PC-3 (cell line): ENCODE measurements at regions of chr20 and their contacts with region 1.

Region 1: DNA sequence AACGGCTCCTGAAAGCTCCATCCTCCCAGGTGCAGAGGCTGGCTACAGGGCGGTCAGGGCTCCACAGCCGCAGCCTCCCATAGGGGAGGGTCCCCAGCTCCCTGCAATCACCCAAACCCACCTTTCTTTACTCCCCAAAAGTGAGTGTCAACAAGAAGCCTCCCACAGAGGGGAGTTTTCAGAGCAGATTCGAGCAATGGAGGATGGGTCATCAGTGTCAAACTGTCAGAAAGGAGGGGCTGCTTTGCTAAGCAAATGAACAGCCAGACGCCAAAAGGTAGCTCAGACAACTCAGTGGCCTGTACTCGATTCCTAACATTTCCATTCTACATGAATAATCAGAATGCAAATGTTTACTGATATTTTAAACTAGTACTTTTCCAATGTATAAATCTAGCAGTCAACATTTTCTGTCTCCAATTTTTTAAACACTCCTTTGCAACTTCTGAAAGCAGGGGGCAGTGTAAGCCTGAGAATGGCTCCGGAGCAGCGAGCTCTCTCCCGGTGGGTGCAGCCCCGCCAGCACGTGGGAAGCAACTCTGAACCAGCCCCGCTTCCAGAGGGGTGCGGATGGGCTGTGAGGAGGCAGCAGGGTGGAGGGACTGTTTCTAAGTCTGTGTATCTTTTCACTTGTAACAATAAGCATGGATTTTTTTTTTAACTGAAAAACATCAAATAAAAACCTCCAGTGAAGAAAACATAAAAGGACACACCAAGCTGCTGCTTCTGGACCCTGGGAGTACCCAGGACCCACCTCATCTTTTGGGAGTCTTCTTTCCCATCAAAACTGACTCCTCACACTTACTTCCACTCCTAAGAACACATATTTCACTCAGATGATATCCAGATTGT is 54.9 kb downstream of the TAF4 start:
- DNase-seq: peak; percentile 60
- ATAC-seq: peak; percentile 82
- H3K4me3 ChIP-seq: no peak overlapping the region
- H3K27ac ChIP-seq: no peak overlapping the region
- H3K4me1 ChIP-seq: no peaks in the 10 kb centered on the region
- H3K27me3 ChIP-seq: no peaks in the 10 kb centered on the region
- CTCF ChIP-seq: peak; percentile 91

Region 2: GRCh38 chr20:61482056-61482887 is 528.5 kb before region 1 on chr20:
- CTCF ChIA-PET with region 1: no interaction called
- POLR2A ChIA-PET with region 1: no interaction called
- intact Hi-C with region 1: no loop called
- DNase-seq: no peak
- ATAC-seq: no peak
- H3K4me3 ChIP-seq: no peak overlapping the region
- H3K27ac ChIP-seq: no peak overlapping the region
- H3K4me1 ChIP-seq: no peaks in the 10 kb centered on the region
- H3K27me3 ChIP-seq: no peaks in the 10 kb centered on the region
- CTCF ChIP-seq: no peak

Region 3: DNA sequence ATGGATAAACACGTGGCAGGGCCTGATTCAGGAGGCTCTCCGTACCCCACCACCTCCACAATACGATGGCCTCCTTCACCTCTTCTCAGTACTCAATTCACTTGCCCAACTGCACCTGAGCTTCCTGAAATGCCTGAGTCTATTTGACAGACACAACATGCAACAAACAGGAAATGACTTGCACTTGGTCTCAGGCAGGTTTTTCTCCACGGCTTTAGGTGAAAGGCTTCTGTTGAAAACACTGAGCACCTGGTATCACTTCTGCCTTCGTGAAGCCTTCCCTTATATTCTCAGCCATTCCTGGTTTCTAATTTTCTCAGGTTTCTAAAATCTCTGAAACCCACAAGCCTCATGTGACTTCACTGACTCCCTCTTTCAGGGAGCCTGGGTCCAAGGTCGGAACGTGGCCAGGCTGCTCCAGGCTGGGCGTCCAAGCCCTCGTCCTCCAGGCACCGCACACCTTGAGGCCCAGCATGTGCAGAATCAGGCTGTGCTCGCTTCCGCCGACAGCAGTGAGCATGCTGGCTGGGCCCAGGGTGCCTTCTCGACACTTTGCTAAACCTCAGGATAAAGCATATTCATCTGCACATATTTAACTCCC is 20.2 kb after region 1 on chr20:
- CTCF ChIA-PET with region 1: no interaction called
- POLR2A ChIA-PET with region 1: interaction called, 12 read pairs
- intact Hi-C with region 1: no loop called
- DNase-seq: peak; percentile 57
- ATAC-seq: peak; percentile 44
- H3K4me3 ChIP-seq: no peak overlapping the region
- H3K27ac ChIP-seq: peak overlapping the region; percentile 46
- H3K4me1 ChIP-seq: peaks cover 20% of the 10 kb centered on the region
- H3K27me3 ChIP-seq: no peaks in the 10 kb centered on the region
- CTCF ChIP-seq: no peak

Region 4: GRCh38 chr20:62065669-62066338 is 55.0 kb after region 1 on chr20 and contains the start of gene TAF4:
- CTCF ChIA-PET with region 1: no interaction called
- POLR2A ChIA-PET with region 1: no interaction called
- intact Hi-C with region 1: loop called (anchors 10 kb)
- DNase-seq: peak; percentile 78
- ATAC-seq: peak; percentile 47
- H3K4me3 ChIP-seq: peak within 1 kb of the TSS; percentile 83
- H3K27ac ChIP-seq: peak within 1 kb of the TSS; percentile 19; the same call in 1 of the 2 replicates
- H3K4me1 ChIP-seq: peaks cover 39% of the 10 kb centered on the region
- H3K27me3 ChIP-seq: no peaks in the 10 kb centered on the region
- CTCF ChIP-seq: no peak
- total RNA-seq, gene TAF4: 9.6 and 15.1 TPM in 2 replicates

Region 5: DNA sequence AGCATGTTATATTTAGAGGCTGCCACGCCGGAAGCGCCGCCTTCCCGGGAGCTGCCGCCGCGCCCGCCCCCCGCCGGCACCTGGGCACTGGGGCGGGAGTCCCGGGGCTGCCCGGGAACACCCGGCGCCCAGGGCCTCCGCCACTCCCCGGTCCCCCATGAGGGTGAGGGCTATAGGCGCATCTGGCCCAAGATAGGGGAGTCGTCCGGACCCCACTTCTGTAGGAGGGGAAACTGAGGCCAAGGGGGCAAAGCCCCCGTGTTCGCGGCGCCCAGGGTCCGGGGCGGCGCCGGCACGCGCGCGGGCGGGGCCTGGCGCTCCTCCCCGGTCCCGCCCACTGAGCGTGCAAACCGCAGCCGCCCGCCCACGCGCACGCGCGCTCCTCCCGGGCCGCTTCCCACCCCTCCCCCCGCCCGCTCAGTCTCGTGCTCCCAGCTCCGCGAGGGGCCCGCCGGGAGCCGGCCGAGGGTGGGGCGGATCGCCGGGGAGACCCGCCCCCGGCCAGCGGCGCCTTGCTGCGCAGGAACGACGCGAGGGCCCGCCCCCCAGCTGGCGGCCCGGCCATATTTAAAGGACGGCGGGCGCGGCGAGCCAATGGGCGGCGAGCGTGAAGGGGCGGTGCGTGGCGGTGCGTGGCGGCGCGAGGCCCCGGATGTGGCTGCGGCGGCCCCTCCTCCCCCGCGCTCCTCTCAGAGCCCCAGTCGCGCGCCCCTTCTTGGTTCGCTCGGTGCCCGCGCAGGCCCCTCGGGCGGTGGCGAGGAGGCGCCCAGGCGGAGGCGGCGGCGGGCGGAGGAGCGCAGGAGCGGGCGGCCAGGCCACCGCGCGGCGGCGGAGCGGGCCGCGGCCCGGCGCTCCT is 111.2 kb after region 1 on chr20 and contains the start of gene LSM14B:
- CTCF ChIA-PET with region 1: interaction called, 7 read pairs
- POLR2A ChIA-PET with region 1: no interaction called
- intact Hi-C with region 1: loop called (anchors 5 kb)
- DNase-seq: peak; percentile 98
- ATAC-seq: peak; percentile 77
- H3K4me3 ChIP-seq: peak within 1 kb of the TSS; percentile 85
- H3K27ac ChIP-seq: peak within 1 kb of the TSS; percentile 78
- H3K4me1 ChIP-seq: peaks cover 14% of the 10 kb centered on the region; the same call in 1 of the 2 replicates
- H3K27me3 ChIP-seq: no peaks in the 10 kb centered on the region
- CTCF ChIP-seq: no peak
- total RNA-seq, gene LSM14B: 50.1 and 51.8 TPM in 2 replicates

Region 6: GRCh38 chr20:62136283-62137091 is 125.7 kb after region 1 on chr20:
- CTCF ChIA-PET with region 1: interaction called, 4 read pairs
- POLR2A ChIA-PET with region 1: no interaction called
- intact Hi-C with region 1: loop called (anchors 1 kb)
- DNase-seq: peak; percentile 82
- ATAC-seq: peak; percentile 68
- H3K4me3 ChIP-seq: no peak overlapping the region
- H3K27ac ChIP-seq: no peak overlapping the region
- H3K4me1 ChIP-seq: peaks cover 10% of the 10 kb centered on the region
- H3K27me3 ChIP-seq: no peaks in the 10 kb centered on the region
- CTCF ChIP-seq: peak; percentile 96